Heart left ventricle (tissue), 16 donors: ENCODE measurements at regions of chr2 and their contacts with region 1.

Region 1: GRCh38 chr2:230068016-230068650 is 591 bp downstream of the SLC16A14 start:
- DNase-seq: peak; percentile 47 to 80 (median 56)
- ATAC-seq: peak; percentile 13 to 76 (median 62)
- H3K4me3 ChIP-seq: peak overlapping the region; percentile 52 to 76 (median 70)
- H3K27ac ChIP-seq: peak overlapping the region; percentile 0 to 84 (median 62)
- H3K4me1 ChIP-seq: peaks cover 0 to 23% (median 6%) of the 10 kb centered on the region in 12 donors
- H3K27me3 ChIP-seq: peaks cover 0 to 8% (median 0%) of the 10 kb centered on the region in 9 donors
- CTCF ChIP-seq: peak in 6 of 12 donors; percentile 13 to 35 (median 19)
- POLR2A ChIP-seq: no peak

Region 2: DNA sequence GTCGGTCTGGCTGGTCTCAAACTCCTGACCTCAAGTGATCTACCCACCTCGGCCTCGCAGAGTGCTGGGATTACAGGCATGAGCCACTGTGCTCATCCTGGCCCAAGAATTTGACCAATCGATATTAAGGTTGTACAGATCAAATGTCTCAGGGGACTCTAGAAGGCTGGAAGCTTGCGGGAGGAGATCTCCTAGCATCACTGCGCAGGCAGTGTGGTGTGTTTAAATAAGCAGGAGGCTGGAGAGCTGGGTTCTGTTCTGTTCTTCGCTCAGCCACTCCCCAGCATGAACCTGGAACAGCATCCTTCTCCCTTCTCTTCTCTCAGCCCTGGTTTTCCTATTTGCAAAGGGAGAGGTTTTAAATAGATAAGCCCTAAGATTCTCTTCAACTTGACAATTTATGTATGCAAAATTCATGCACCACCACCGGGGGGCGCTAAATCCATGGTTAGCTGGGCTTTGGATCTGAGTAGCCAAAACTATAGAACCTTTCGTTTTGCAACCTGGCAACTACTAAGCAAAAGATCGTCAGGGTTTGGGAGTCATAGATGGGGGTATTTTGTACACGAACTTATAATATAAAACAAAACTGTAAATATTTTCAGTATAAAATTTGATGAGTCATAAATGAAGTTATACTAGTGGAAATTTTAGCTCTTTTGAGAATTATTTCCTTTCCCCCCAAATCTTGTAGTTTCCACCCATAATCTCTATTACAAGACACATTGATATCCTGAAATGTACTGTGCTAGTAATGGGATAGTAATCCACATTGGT is 60.0 kb before region 1 on chr2:
- intact Hi-C with region 1: loop called in 5 of 10 experiments (anchors 1 to 5 kb)
- DNase-seq: peak; percentile 56 to 84 (median 69)
- ATAC-seq: peak; percentile 47 to 62 (median 58)
- H3K4me3 ChIP-seq: peak overlapping the region in 7 of 12 donors; percentile 4 to 36 (median 20)
- H3K27ac ChIP-seq: no peak overlapping the region
- H3K4me1 ChIP-seq: peaks cover 0 to 9% (median 2%) of the 10 kb centered on the region in 12 donors
- H3K27me3 ChIP-seq: no peaks in the 10 kb centered on the region
- CTCF ChIP-seq: peak; percentile 77 to 87 (median 83)
- POLR2A ChIP-seq: no peak

Region 3: DNA sequence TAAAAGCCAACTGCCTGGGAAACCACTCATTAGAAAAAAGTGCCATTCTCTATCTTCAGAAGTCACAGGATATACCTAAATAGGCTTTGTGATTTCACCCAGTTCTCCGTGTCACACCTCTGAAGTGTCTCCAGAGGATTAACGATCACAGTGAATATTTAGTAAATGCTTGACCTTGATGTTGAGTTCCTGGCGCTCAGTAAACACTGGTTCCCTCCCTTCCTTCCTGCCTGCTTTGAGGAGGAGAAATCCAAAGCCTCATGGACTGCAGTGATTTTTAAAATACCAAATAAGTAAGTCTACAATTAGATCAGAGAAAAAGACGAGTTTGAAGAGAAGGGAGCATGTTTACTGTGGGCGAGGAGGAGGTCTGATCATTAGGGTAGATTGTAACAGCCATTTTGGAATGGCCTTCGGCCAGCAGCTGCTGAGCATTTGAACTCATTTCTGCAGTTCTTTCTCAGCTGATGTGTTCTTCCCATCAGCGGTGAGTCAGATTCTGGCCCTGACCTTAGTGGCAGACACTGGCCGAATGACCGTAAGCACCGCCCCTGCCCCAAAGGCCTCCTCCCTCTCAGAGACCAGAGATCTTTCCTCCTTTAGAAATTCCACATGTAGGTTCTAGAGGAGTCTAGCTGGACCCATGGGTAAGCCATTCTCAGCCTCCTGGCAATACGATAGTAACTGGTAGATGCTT is 62.7 kb after region 1 on chr2:
- intact Hi-C with region 1: loop called in 2 of 10 experiments (anchors 5 to 10 kb)
- DNase-seq: peak; percentile 68 to 77 (median 74)
- ATAC-seq: peak; percentile 74 to 92 (median 88)
- H3K4me3 ChIP-seq: peak overlapping the region in 5 of 12 donors; percentile 0 to 12 (median 5)
- H3K27ac ChIP-seq: peak overlapping the region; percentile 60 to 90 (median 74)
- H3K4me1 ChIP-seq: peaks cover 4 to 42% (median 15%) of the 10 kb centered on the region in 12 donors
- H3K27me3 ChIP-seq: no peaks in the 10 kb centered on the region
- CTCF ChIP-seq: no peak
- POLR2A ChIP-seq: no peak

Region 4: DNA sequence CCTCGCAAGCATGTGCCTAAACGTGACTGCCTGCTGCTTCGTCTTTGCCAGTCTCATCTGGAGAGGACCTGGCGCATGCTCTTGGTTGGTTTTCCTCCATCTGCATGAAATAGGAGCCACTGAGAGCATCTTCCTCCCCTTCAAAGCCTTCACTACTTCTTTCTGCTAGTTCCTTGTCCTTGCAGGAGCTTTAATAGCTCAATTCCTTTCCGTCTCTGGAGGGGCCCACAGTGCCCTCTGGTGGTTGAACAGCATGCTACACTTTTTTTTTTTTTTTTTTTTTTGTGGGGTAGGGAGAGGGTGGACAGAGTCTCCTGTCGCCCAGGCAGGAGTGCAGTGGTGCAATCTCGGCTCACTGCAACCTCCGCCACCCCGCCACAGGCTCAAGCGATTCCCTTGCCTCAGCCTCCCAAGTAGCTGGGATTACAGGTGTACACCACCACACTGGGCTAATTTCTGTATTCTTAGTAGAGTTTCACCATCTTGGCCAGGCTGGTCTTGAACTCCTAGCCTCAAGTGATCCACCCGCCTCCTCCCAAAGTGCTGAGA is 92.1 kb after region 1 on chr2:
- intact Hi-C with region 1: loop called in 9 of 10 experiments (anchors 1 to 5 kb)
- DNase-seq: peak in 3 of 5 donors; percentile 45 to 66 (median 52)
- ATAC-seq: peak; percentile 25 to 76 (median 70)
- H3K4me3 ChIP-seq: no peak overlapping the region
- H3K27ac ChIP-seq: no peak overlapping the region
- H3K4me1 ChIP-seq: peaks cover 0 to 4% (median 0%) of the 10 kb centered on the region in 12 donors
- H3K27me3 ChIP-seq: no peaks in the 10 kb centered on the region
- CTCF ChIP-seq: peak; percentile 61 to 85 (median 81)
- POLR2A ChIP-seq: no peak